Uterus (tissue), 4 donors: ENCODE measurements at regions of chr5 and their contacts with region 1.

Region 1: GRCh38 chr5:32329308-32329834 is 16.6 kb upstream of the MTMR12 start:
- DNase-seq: peak in 1 of 2 donors; percentile 49
- H3K4me3 ChIP-seq: no peak overlapping the region
- H3K27ac ChIP-seq: peak overlapping the region in 1 of 2 donors; percentile 20
- H3K4me1 ChIP-seq: no peaks in the 10 kb centered on the region
- H3K27me3 ChIP-seq: no peaks in the 10 kb centered on the region
- CTCF ChIP-seq: peak; percentile 39 to 56 (median 50)
- POLR2A ChIP-seq: no peak

Region 2: GRCh38 chr5:32241034-32241783 is 88.2 kb before region 1 on chr5:
- intact Hi-C with region 1: loop called (anchors 10 kb)
- DNase-seq: no peak
- H3K4me3 ChIP-seq: no peak overlapping the region
- H3K27ac ChIP-seq: no peak overlapping the region
- H3K4me1 ChIP-seq: no peaks in the 10 kb centered on the region
- H3K27me3 ChIP-seq: no peaks in the 10 kb centered on the region
- CTCF ChIP-seq: no peak
- POLR2A ChIP-seq: no peak